ENCODE measurements at regions of chr5 and their contacts with region 1.

Region 1: DNA sequence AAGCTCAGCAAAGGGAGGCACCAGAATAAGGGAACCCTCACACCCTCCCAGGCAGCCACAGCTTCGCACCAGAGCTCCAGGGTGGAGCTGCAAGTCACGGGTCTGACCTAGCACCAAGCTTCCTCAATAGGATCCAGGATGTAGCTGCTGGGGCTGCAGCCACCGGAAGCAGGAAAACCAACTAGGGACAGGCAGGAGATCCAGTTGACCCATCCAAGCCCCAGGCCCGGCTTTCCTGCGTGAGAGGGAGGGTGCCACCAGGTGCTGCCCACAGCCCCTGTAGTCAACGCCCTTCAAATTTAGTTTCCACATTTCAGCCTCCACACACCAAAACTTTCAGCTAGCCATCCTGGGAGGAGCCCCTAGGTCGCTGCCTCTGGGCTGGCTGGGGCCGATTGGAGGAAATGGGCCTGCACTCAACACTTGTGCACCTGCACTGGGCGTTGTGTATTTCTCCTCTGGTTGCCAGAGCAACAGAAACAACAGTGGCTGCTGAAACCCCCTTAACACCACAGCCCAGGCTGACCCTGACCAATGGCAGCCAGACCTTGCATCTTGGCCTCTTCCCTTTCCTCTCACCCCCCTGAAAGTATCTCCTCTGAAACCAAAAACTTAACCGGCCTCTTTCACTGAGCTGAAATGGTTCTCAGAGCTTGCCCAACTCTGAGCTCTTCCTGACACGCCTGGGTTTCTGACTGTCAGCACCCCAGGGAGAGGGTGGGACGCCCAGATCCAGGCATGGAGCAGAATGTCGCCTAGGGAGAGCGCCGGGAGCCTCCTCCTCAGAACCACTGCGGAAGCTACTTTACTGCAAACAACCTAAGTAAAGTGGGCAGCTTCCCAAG is 226.5 kb upstream of the MAP3K1 start:
- DNase-seq: peak; percentile 76
- ATAC-seq: peak; percentile 73

Region 2: DNA sequence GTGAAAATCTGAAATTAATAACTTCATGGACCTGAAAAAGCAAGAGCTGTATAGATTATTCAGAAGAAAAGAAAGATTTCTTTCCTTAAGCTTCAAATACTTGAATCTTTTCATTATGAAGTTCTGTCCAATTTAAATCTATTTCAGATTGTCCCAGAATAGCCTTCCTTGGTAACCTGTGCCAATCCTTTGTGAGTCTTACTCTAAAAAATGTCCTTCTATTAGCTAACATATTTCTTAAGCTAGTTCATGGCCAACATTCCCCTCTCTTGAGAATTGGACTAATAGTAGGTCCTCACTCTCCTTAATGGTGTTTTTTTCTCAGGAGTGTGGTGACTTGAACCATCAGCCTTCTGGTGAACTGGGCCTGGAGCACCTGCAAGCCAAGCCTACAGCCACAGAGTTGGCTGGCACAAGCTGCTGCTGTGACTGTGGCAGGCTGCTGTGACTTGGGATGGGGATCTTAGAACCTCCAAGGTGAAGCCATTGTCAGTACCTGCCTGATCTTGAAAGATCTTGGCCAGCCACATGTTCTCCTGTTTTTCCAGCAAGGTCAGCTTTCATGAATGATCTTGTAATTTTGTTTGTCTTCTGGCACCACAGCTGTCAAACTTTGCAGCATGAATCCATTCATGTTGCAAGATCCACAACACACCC is 36.1 kb before region 1 on chr5:
- intact Hi-C with region 1: no loop called
- DNase-seq: no peak
- ATAC-seq: no peak

Region 3: GRCh38 chr5:56696900-56697299 is 108.0 kb after region 1 on chr5:
- intact Hi-C with region 1: loop called (anchors 10 kb)
- DNase-seq: no peak
- ATAC-seq: no peak

Region 4: DNA sequence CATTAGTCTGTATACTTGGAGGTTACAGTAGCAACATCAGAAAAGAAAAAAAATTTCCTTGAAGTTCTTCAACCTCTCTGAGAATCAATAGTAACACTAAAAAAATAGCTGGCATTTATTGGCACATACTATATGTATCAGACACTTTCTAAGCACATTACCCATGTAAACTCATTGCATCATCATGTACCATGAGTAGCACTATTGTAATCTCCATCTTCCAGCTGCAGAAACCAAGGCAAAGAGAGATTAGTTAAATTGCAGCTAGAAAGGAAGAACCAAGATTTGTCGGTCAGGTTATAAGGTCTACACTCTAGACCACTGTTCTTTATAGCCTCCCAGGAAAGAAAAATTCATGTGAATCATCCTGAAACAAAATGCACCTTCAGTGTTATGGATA is 1962.6 kb after region 1 on chr5:
- intact Hi-C with region 1: no loop called
- DNase-seq: no peak
- ATAC-seq: no peak